Adrenal gland (tissue), 19 donors: ENCODE measurements at regions of chr1 and their contacts with region 1.

Region 1: DNA sequence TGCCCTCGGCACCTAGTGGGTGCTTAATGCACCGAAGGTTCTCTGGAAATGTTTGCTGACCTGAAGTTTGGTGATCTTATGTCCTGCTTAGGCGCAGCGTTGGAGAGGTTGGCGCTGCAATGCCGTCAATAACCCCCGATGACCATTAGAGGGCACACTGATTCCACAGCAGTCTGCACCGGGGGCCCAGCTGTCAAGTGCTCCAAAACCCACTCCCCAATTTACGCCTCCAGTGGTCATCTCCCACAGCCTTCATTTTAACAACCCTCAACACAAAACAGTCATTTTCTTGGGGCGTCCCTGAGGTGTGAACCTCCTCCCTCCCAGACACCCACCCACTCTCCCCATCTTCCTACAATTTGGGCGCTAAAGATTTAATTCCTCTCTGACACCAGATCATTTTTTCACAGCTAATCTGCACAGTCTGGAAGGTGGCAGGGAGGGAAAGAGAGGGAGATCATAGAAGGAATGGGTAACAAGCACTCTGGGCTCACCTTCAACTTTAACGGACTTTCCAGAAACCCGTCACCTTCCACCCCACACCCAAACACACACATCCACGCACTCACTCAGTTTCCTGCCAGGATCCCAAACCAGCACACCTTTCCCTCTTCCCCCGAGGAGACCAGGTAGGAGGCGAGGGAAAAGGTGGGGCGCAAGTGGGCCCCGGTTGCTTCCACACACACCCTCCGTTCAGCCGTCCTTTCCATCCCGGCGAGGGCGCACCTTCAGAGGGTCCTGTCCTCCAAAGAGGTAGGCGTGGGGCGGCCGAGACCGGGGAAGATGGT is 576 bp upstream of the NPR1 start:
- DNase-seq: peak; percentile 37 to 78 (median 59)
- H3K4me3 ChIP-seq: peak overlapping the region in 2 of 4 donors; percentile 49 to 78
- H3K27ac ChIP-seq: peak overlapping the region in 2 of 5 donors; percentile 38 to 51
- H3K4me1 ChIP-seq: peaks cover 20% of the 10 kb centered on the region in 2 donors
- H3K27me3 ChIP-seq: no peaks in the 10 kb centered on the region
- CTCF ChIP-seq: peak; percentile 78 to 91 (median 88)
- POLR2A ChIP-seq: no peak

Region 2: DNA sequence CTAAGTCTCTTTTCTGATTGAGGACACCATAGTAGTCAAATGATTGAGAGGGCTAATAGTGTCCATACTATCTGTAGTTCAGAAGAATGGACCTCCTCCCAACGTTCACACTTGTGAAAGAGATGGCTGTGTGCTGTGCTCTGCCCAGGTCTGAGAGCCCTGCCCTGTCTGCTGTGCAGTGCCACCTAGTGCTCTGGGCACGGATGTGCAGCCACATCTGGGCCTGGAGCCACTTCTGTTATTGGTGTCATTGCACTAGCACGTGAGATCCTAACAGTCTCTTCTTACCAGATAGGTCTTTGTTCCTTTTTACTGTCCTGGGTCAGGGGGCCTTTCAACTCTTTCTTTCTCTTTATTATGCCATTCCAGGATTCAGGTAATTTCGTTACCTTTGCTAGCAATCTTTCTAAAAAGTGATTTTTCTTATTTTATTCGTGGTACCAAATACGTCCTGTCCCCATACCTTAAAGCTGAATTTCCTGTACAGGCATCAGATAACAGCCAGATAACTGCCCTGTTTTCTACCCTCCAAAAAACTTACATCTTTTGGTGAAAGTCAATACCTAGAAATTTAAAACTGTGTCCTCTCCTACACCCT is 71.6 kb after region 1 on chr1:
- intact Hi-C with region 1: loop called (anchors 2 to 5 kb)
- DNase-seq: peak; percentile 86 to 96 (median 89)
- H3K4me3 ChIP-seq: no peak overlapping the region
- H3K27ac ChIP-seq: peak overlapping the region in 3 of 5 donors; percentile 19 to 43 (median 35)
- H3K4me1 ChIP-seq: peaks cover 8 to 12% of the 10 kb centered on the region in 2 donors
- H3K27me3 ChIP-seq: no peaks in the 10 kb centered on the region
- CTCF ChIP-seq: peak; percentile 79 to 97 (median 94)
- POLR2A ChIP-seq: peak in 1 of 2 donors; percentile 15

Region 3: GRCh38 chr1:153763365-153764225 is 85.7 kb after region 1 on chr1:
- intact Hi-C with region 1: loop called in 1 of 2 experiments (anchors 5 kb)
- DNase-seq: no peak
- H3K4me3 ChIP-seq: no peak overlapping the region
- H3K27ac ChIP-seq: peak overlapping the region in 1 of 5 donors; percentile 66
- H3K4me1 ChIP-seq: no peaks in the 10 kb centered on the region
- H3K27me3 ChIP-seq: no peaks in the 10 kb centered on the region
- CTCF ChIP-seq: no peak
- POLR2A ChIP-seq: no peak

Region 4: GRCh38 chr1:153985941-153986761 is 308.2 kb after region 1 on chr1 and contains the start of gene RAB13:
- intact Hi-C with region 1: loop called in 1 of 2 experiments (anchors 10 kb)
- DNase-seq: peak; percentile 87 to 92 (median 89)
- H3K4me3 ChIP-seq: peak within 1 kb of the TSS in 3 of 4 donors; percentile 53 to 84 (median 70)
- H3K27ac ChIP-seq: peak within 1 kb of the TSS; percentile 67 to 90 (median 88)
- H3K4me1 ChIP-seq: peaks cover 15 to 29% of the 10 kb centered on the region in 2 donors
- H3K27me3 ChIP-seq: no peaks in the 10 kb centered on the region
- CTCF ChIP-seq: no peak
- POLR2A ChIP-seq: peak in 1 of 2 donors; percentile 60
- total RNA-seq, gene RAB13: 22.9 to 165 (median 86.7) TPM